Left ventricle myocardium inferior (tissue), 1 donor: ENCODE measurements at regions of chr12 and their contacts with region 1.

Region 1: DNA sequence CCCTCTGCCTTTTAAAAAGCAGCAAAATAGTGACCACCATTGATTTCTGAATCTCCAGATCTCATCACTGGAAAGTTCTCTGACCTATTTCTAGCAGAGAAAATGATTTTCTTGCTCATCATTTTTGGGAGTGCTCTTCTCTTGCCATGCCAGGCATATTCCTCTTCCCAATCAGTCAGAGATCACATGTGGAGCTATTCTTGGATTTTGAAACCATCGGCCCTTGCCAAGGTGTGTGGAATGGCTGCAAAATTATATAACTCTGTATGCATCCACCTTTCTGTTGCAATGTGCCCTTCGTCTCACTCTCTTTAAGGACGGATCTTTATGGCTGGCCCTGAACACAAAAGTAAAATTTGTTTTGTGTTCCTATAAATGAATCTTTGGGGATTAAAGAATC is 25.5 kb upstream of the LDHB start:
- DNase-seq: no peak
- H3K4me3 ChIP-seq: no peak overlapping the region
- H3K27ac ChIP-seq: peak overlapping the region; percentile 54
- H3K4me1 ChIP-seq: peaks cover 14% of the 10 kb centered on the region
- H3K27me3 ChIP-seq: no peaks in the 10 kb centered on the region
- CTCF ChIP-seq: no peak

Region 2: GRCh38 chr12:21451529-21451928 is 231.6 kb before region 1 on chr12:
- intact Hi-C with region 1: no loop called
- DNase-seq: no peak
- H3K4me3 ChIP-seq: no peak overlapping the region
- H3K27ac ChIP-seq: no peak overlapping the region
- H3K4me1 ChIP-seq: no peaks in the 10 kb centered on the region
- H3K27me3 ChIP-seq: no peaks in the 10 kb centered on the region
- CTCF ChIP-seq: no peak

Region 3: DNA sequence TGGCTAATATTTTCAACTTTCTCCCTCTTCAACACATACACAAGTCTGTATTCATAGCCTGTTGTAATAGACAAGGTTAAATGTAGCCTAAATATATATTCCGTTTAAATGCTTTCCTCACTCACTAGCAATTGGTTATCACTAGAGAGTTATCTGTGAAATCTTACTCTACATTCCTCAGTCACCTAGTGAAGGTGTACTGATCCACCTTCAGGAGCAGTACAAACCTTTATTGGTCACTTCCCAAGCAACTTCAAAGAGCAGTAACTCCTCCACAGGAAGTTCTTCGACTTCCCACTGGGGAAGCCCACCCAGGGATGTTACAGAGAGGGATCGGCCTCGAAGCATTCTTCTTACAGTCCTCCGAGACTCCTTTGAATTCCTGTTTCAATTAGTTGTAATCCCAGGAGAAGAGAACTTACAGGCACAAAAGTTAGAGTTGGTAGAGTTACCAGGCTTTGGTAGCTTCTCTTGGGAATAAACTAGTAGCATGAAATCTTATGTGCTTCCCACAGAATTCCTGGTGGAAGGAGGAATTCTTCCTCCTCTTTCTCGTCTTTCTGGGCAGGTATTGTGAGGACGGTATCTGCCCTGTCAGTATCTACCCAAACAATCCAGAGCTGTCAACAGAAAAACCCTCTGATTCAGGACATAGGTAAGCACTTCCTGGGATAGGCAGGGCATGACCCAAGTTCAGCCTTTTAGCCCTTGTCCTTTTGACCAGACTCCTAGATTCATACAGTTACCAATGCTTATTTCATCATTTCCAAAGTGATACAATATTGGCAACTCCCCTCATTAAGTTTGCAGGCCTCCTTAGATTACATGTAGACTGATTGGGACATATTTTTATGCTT is 78.6 kb before region 1 on chr12 and contains the start of gene GYS2:
- intact Hi-C with region 1: loop called (anchors 5 kb)
- DNase-seq: no peak
- H3K4me3 ChIP-seq: no peak within 1 kb of the TSS
- H3K27ac ChIP-seq: no peak within 1 kb of the TSS
- H3K4me1 ChIP-seq: peaks cover 5% of the 10 kb centered on the region
- H3K27me3 ChIP-seq: no peaks in the 10 kb centered on the region
- CTCF ChIP-seq: no peak
- total RNA-seq, gene GYS2: not detected